ENCODE measurements at regions of chr19 and their contacts with region 1.

Region 1: GRCh38 chr19:1243761-1244692 is 2.5 kb downstream of the ATP5F1D start:
- DNase-seq: peak; percentile 75
- H3K27ac ChIP-seq: peak overlapping the region; percentile 100
- CTCF ChIP-seq: peak; percentile 93

Region 2: GRCh38 chr19:1223018-1223855 is 20.8 kb before region 1 on chr19:
- CTCF ChIA-PET with region 1: interaction called, 10 read pairs
- POLR2A ChIA-PET with region 1: no interaction called
- DNase-seq: no peak
- H3K27ac ChIP-seq: peak overlapping the region; percentile 98
- CTCF ChIP-seq: peak; percentile 54

Region 3: DNA sequence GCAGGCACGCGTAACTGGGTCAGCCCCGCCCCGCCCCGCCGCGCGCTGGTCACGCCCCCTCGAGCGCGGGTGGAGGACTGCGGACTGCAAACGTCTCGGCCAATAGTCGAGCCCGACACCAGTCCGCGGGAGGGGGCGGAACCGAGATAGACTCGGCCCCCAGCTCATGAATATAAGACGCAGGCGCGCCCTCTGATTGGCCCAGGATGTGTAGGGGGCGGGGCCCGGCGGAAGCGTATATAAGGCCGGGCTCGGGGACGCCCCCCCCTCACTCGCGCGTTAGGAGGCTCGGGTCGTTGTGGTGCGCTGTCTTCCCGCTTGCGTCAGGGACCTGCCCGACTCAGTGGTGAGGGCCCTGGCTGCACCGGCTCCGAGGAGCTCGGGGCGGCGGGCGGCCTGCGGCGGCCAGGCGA is 25.0 kb after region 1 on chr19 and contains the start of gene CIRBP:
- CTCF ChIA-PET with region 1: interaction called, 116 read pairs
- POLR2A ChIA-PET with region 1: interaction called, 40 read pairs
- DNase-seq: peak; percentile 95
- H3K27ac ChIP-seq: peak within 1 kb of the TSS; percentile 100
- CTCF ChIP-seq: no peak

Region 4: DNA sequence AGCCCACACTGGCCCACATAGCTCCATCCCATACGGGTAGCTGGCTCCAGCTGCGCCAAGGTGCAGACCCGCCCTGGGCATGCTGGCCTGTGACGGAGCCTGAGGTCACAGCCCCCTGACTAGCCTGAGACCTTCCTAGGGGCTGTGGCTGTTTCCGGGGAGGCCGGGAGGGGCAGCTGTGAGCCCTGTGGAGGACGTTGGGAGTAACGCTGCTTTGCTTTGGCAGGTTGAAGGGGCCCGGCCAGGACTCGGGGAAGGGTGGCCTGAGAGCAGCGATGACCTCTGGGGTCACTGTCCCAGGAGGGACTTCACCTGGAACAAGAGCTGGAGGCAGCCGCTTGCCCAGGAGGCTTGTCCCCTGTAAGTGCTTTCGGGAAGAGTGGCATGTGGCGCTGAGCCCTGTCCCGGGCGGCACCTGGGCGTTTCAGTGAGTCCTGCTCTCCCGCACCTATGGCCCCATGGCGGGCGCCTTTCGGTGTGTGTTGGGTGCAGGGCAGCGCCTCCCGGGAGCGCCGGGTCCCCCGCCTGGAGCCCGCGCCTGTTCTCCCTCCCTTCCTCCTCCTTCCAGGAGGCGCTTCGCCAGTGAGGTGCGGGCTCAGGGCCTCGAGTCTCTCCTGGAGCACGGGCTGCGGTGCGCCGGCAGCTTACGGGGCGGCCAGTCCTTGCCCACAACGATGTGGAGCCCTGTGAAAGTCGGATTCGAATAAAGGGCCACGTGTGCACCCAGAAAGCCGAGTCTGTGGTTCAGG is 30.2 kb after region 1 on chr19:
- CTCF ChIA-PET with region 1: interaction called, 116 read pairs
- POLR2A ChIA-PET with region 1: interaction called, 40 read pairs
- DNase-seq: no peak
- H3K27ac ChIP-seq: peak overlapping the region; percentile 100
- CTCF ChIP-seq: no peak